ENCODE measurements at regions of chr4 and their contacts with region 1.

Region 1: GRCh38 chr4:26793735-26794134 is 66.9 kb upstream of the STIM2 start:
- DNase-seq: peak; percentile 19
- H3K27ac ChIP-seq: no peak overlapping the region
- CTCF ChIP-seq: no peak

Region 2: GRCh38 chr4:26687728-26688127 is 106.0 kb before region 1 on chr4:
- CTCF ChIA-PET with region 1: interaction called, 10 read pairs
- POLR2A ChIA-PET with region 1: no interaction called
- DNase-seq: peak; percentile 49
- H3K27ac ChIP-seq: no peak overlapping the region
- CTCF ChIP-seq: no peak

Measured in RWPE1 (cell line).